CD14-positive monocyte (primary cell): ENCODE measurements at regions of chr2 and their contacts with region 1.

Region 1: GRCh38 chr2:3379647-3380534 is at the start of gene TRAPPC12:
- DNase-seq: peak; percentile 81 to 89 (median 84)
- H3K4me3 ChIP-seq: peak within 1 kb of the TSS; percentile 52 to 96 (median 84)
- H3K4me3 Mint-ChIP-seq: peak within 1 kb of the TSS; percentile 92 to 96
- H3K27ac ChIP-seq: peak within 1 kb of the TSS; percentile 82 to 92
- H3K27ac Mint-ChIP-seq: peak within 1 kb of the TSS; percentile 91 to 97 (median 94)
- H3K4me1 ChIP-seq: peaks cover 36 to 41% of the 10 kb centered on the region in 2 donors
- H3K4me1 Mint-ChIP-seq: peaks cover 38% of the 10 kb centered on the region
- H3K27me3 ChIP-seq: no peaks in the 10 kb centered on the region
- H3K27me3 Mint-ChIP-seq: no peaks in the 10 kb centered on the region
- CTCF ChIP-seq: peak; percentile 28
- polyA plus RNA-seq, gene TRAPPC12: 26.6 to 72.1 (median 44.7) TPM

Region 2: DNA sequence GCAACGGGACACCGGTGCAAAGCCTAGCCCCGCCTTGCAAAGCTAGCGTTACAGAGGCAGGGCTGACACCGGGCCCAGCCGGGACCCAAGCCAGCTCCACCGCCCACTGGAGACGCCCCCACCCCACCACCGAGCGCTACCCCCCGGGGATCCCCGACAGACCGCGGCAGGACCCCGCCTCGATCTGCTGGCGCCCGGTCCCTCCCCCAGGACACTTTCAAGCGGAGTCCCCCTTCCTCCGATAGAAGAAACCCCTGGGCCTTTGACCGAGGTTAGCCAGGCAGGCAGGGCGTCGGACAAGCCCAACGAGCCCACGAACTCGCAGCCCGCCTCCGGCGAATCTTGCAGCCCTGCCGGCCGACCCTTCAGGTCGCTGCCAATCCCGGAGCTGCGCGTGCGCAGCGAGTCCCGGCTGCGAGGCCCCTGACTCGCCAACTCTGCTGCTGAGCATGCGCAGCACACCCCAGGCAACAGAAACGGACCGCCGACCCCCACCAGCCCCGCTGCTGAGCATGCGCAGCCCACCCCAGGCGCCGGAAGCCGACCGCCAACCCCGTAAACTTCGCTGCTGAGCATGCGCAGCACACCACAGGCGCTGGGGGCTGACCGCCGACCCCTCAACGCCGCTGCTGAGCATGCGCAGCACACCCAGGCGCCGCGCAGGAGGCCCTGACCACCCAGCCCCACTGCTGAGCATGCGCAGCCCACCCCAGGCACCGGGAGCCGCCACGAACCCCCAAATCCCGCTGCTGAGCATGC is 138.8 kb after region 1 on chr2:
- intact Hi-C with region 1: loop called in 1 of 2 experiments (anchors 10 kb)
- DNase-seq: peak; percentile 93 to 95 (median 95)
- H3K4me3 ChIP-seq: peak overlapping the region; percentile 81 to 94 (median 88)
- H3K4me3 Mint-ChIP-seq: peak overlapping the region; percentile 88 to 93
- H3K27ac ChIP-seq: peak overlapping the region; percentile 74 to 87
- H3K27ac Mint-ChIP-seq: peak overlapping the region; percentile 65 to 88 (median 84)
- H3K4me1 ChIP-seq: peaks cover 18 to 30% of the 10 kb centered on the region in 2 donors
- H3K4me1 Mint-ChIP-seq: peaks cover 30% of the 10 kb centered on the region
- H3K27me3 ChIP-seq: no peaks in the 10 kb centered on the region
- H3K27me3 Mint-ChIP-seq: peaks cover 0 to 1% (median 0%) of the 10 kb centered on the region in 3 donors
- CTCF ChIP-seq: no peak

Region 3: GRCh38 chr2:3558205-3559014 is 178.5 kb after region 1 on chr2 and contains the start of gene RNASEH1:
- intact Hi-C with region 1: loop called in 1 of 2 experiments (anchors 1 kb)
- DNase-seq: peak; percentile 98 to 99 (median 99)
- H3K4me3 ChIP-seq: peak within 1 kb of the TSS; percentile 82 to 92 (median 85)
- H3K4me3 Mint-ChIP-seq: peak within 1 kb of the TSS; percentile 85 to 90
- H3K27ac ChIP-seq: peak within 1 kb of the TSS; percentile 82 to 87
- H3K27ac Mint-ChIP-seq: peak within 1 kb of the TSS; percentile 86 to 96 (median 92)
- H3K4me1 ChIP-seq: peaks cover 18 to 24% of the 10 kb centered on the region in 2 donors
- H3K4me1 Mint-ChIP-seq: peaks cover 22% of the 10 kb centered on the region
- H3K27me3 ChIP-seq: no peaks in the 10 kb centered on the region
- H3K27me3 Mint-ChIP-seq: no peaks in the 10 kb centered on the region
- CTCF ChIP-seq: no peak
- polyA plus RNA-seq, gene RNASEH1: 6.8 to 16.4 (median 14.2) TPM